B cell (primary cell): ENCODE measurements at regions of chr15 and their contacts with region 1.

Region 1: DNA sequence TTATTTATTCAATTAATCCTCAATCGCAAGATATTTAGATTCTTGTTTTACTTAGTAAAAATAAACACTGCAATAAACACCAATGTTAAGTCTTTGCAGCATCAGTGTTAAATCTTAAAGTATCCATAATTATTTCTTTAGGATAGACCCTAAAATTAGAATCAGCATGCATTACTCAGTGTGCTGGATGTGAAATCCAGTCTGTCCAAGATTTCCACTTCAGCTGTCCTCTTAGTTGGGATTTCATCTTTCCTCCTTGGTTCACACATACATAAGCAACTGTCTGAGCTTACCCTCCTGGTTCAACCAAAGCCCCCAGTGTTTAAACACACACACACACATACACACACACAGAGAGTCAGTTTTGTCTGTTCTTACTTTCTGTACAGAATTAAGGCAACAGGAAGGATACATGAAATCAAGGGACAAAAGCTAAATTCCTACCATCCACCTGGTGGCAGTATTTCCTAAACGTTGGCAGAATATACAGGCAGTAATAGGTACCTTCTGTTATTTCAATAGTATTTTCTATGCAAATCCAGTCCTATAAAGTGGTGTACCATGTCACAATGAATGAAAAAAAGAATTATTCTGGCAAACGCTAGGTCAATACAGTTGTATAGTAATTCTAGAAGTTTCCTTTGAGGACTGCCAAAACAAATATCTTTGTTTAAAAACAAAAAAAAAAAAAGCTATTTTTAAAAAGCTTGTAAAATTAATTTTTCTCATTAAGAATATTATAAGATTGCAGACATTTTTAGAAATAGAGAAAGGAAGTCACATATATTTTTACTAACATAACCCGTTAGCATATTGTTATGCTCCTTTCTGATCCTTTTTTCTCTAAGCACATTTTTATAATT is 27.3 kb upstream of the DMXL2 start:
- DNase-seq: peak; percentile 80
- ATAC-seq: peak; percentile 75
- H3K4me3 ChIP-seq: no peak overlapping the region
- H3K4me3 Mint-ChIP-seq: no peak overlapping the region
- H3K27ac ChIP-seq: no peak overlapping the region
- H3K27ac Mint-ChIP-seq: no peak overlapping the region
- H3K4me1 ChIP-seq: no peaks in the 10 kb centered on the region
- H3K4me1 Mint-ChIP-seq: no peaks in the 10 kb centered on the region
- H3K27me3 ChIP-seq: no peaks in the 10 kb centered on the region
- H3K27me3 Mint-ChIP-seq: no peaks in the 10 kb centered on the region
- CTCF ChIP-seq: peak; percentile 94

Region 2: DNA sequence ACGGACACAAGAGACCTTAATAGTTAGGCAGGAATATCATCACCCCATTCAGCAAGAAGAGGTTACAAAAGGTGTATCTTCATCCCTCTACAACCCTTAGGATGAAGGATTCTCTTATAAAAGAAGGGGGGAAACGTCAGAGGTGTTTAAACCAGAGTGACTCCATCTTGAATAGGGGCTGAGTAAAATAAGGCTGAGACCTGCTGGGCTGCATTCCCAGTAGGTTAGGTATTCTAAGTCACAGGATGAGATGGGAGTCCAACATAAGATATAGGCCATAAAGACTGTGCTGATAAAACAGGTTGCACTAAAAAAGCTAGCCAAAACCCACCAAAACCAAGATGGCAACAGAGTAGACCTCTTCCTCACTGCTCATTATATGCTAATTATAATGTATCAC is 979.8 kb before region 1 on chr15:
- CTCF ChIA-PET with region 1: no interaction called
- POLR2A ChIA-PET with region 1: no interaction called
- intact Hi-C with region 1: no loop called
- DNase-seq: no peak
- ATAC-seq: no peak
- H3K4me3 ChIP-seq: no peak overlapping the region
- H3K4me3 Mint-ChIP-seq: no peak overlapping the region
- H3K27ac ChIP-seq: no peak overlapping the region
- H3K27ac Mint-ChIP-seq: no peak overlapping the region
- H3K4me1 ChIP-seq: no peaks in the 10 kb centered on the region
- H3K4me1 Mint-ChIP-seq: peaks cover 20% of the 10 kb centered on the region
- H3K27me3 ChIP-seq: no peaks in the 10 kb centered on the region
- H3K27me3 Mint-ChIP-seq: no peaks in the 10 kb centered on the region
- CTCF ChIP-seq: no peak

Region 3: DNA sequence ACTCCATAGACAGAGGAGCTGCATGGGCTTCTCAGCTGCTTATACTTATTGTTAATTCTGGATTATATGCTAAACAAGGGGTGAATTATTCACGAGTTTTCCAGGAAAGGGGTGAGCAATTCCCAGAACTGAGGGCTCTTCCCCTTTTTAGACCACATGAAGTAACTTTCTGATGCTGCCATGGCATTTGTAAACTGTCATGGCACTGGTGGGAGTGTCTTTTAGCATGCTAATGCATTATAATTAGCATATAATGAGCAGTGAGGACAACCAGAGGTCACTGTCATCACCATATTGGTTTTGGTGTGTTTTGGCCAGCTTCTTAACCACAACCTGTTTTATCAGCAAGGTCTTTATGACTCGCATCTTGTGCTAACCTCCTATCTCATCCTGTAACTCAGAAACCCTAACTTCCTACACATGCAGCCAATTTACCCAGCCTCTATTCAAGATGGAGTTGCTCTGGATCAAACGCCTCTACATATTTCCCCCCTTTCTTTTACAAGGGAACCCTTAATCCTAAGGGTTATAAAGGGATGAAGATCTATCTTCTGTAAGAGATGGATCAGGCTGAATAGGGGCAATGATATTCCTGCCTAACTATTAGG is 15.2 kb before region 1 on chr15:
- CTCF ChIA-PET with region 1: interaction called, 15 read pairs
- POLR2A ChIA-PET with region 1: no interaction called
- intact Hi-C with region 1: no loop called
- DNase-seq: no peak
- ATAC-seq: no peak
- H3K4me3 ChIP-seq: no peak overlapping the region
- H3K4me3 Mint-ChIP-seq: no peak overlapping the region
- H3K27ac ChIP-seq: no peak overlapping the region
- H3K27ac Mint-ChIP-seq: no peak overlapping the region
- H3K4me1 ChIP-seq: no peaks in the 10 kb centered on the region
- H3K4me1 Mint-ChIP-seq: no peaks in the 10 kb centered on the region
- H3K27me3 ChIP-seq: peaks cover 0 to 10% (median 2%) of the 10 kb centered on the region in 4 experiments
- H3K27me3 Mint-ChIP-seq: peaks cover 7% of the 10 kb centered on the region
- CTCF ChIP-seq: no peak

Region 4: GRCh38 chr15:51726351-51727073 is 76.6 kb after region 1 on chr15:
- CTCF ChIA-PET with region 1: interaction called, 133 read pairs
- POLR2A ChIA-PET with region 1: no interaction called
- intact Hi-C with region 1: no loop called
- DNase-seq: peak; percentile 6
- ATAC-seq: peak; percentile 92
- H3K4me3 ChIP-seq: no peak overlapping the region
- H3K4me3 Mint-ChIP-seq: peak overlapping the region; percentile 32
- H3K27ac ChIP-seq: no peak overlapping the region
- H3K27ac Mint-ChIP-seq: peak overlapping the region; percentile 27
- H3K4me1 ChIP-seq: peaks cover 55 to 66% of the 10 kb centered on the region in 2 donors
- H3K4me1 Mint-ChIP-seq: peaks cover 75% of the 10 kb centered on the region
- H3K27me3 ChIP-seq: no peaks in the 10 kb centered on the region
- H3K27me3 Mint-ChIP-seq: no peaks in the 10 kb centered on the region
- CTCF ChIP-seq: no peak

Region 5: DNA sequence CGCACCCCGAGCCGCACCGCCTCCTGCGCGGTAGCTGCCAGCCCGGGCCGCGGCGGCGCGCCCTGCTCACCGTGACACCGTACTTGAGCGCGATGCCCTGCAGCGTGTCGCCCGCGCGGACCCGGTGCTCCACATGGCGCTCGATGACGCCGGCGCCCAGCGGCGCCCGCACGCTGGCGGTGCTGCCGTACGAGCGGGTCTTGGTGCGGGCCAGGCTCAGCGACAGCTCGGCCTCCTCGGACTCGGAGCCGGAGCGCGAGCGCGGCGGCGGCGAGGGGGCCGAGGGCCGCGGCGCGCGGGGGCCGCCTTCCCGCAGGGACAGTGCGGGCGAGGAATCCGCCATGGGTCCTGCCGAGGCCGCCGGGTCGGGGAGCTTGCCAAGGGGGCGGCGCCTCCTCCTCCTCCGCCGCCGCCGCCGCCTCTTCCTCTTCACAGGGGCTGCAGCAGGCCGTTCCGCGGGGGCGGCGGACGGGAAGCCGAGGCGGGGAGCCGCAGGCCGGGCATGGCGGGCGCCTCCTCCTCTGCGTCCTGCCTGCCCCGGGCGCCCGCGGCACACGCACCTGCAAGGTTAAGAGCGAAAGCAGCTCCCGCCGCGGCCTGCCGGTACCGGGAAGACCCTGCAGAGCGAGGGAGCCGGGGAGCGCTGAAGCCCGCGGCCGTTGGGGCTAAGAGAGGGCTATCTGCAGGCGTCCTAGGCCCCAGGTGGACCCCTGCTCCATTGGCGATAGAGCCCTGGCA is 87.6 kb after region 1 on chr15 and contains the start of gene LYSMD2:
- CTCF ChIA-PET with region 1: interaction called, 133 read pairs
- POLR2A ChIA-PET with region 1: no interaction called
- intact Hi-C with region 1: loop called (anchors 2 kb)
- DNase-seq: peak; percentile 82
- ATAC-seq: peak; percentile 67
- H3K4me3 ChIP-seq: peak within 1 kb of the TSS; percentile 68 to 93 (median 73)
- H3K4me3 Mint-ChIP-seq: peak within 1 kb of the TSS; percentile 98
- H3K27ac ChIP-seq: peak within 1 kb of the TSS; percentile 87 to 89
- H3K27ac Mint-ChIP-seq: peak within 1 kb of the TSS; percentile 95
- H3K4me1 ChIP-seq: peaks cover 49 to 53% of the 10 kb centered on the region in 2 donors
- H3K4me1 Mint-ChIP-seq: peaks cover 55% of the 10 kb centered on the region
- H3K27me3 ChIP-seq: no peaks in the 10 kb centered on the region
- H3K27me3 Mint-ChIP-seq: no peaks in the 10 kb centered on the region
- CTCF ChIP-seq: no peak
- total RNA-seq, gene LYSMD2: 48.2 and 49.4 TPM in 2 replicates

Region 6: DNA sequence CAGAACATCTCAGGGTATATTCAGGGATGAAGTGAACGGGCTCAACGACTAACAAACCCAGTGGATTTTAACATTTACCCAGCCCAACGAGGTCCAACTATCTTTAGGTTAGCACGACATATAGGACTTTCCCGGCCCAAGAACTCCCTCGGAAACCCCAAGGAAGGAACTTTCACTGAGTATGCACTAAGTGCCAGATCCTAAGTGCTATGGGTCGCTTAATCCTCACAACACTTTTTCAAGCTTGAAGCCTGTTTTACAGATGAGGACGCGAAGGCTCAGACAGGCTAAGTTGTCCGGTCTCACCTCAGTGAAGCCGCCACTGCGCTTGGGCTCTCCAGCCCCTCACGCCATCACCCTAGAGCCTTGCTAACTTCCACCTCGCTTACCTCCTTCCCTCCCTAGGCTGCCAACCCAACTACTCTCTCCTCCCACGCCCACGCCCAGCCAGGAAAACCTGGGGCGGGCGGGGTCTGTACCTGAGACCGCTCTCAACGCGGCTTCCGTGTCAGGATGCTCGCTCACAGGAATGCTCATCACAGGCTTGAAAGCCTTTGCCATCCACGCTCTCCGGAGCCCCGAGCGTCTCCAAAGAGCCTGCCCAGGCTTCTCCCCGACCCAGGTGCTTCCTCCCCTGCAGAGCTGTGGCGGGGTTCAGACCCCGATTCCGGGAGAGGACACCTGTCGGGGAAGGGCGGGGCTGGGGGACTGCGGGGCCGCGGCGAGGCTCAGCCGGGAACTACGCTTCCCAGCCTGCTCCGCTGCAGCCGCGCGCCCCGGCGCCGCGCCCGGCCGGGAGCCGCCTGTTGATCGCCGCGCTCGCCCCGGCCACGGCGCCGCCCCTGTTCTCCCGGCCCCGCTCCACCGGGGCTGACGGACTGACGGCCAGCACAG is 101.1 kb after region 1 on chr15 and contains the start of gene TMOD2:
- CTCF ChIA-PET with region 1: interaction called, 27 read pairs
- POLR2A ChIA-PET with region 1: no interaction called
- intact Hi-C with region 1: no loop called
- DNase-seq: peak; percentile 68
- ATAC-seq: peak; percentile 84
- H3K4me3 ChIP-seq: peak within 1 kb of the TSS; percentile 32 to 72 (median 63)
- H3K4me3 Mint-ChIP-seq: peak within 1 kb of the TSS; percentile 95
- H3K27ac ChIP-seq: peak within 1 kb of the TSS; percentile 18 to 31
- H3K27ac Mint-ChIP-seq: peak within 1 kb of the TSS; percentile 87
- H3K4me1 ChIP-seq: peaks cover 14 to 24% of the 10 kb centered on the region in 2 donors
- H3K4me1 Mint-ChIP-seq: peaks cover 43% of the 10 kb centered on the region
- H3K27me3 ChIP-seq: no peaks in the 10 kb centered on the region
- H3K27me3 Mint-ChIP-seq: no peaks in the 10 kb centered on the region
- CTCF ChIP-seq: no peak
- total RNA-seq, gene TMOD2: 25.9 and 30.3 TPM in 2 replicates

Region 7: DNA sequence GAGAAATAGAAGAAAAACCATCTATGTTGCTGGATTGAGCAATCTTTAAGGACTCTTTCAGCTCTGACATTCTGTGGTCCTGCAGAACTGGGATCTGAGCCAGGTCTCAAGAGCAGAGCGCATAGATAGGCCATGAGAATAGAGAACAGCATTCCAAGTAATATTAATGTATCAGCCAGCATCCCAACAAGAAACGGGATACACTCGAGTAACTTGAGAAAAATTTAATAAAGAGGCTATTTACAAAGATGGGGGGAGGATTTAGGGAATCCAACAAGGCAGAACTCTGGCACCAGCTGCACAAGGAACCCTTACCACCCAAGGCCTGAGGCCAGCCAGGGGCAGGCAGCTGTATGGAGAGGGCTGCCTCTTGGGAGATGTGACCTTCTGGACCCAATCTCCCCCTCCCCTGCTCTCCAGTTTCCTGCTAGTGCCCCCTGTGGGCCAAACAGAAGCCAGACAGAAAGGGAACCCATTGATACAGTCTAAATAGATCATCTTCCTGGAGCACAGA is 109.7 kb after region 1 on chr15:
- CTCF ChIA-PET with region 1: interaction called, 27 read pairs
- POLR2A ChIA-PET with region 1: no interaction called
- intact Hi-C with region 1: no loop called
- DNase-seq: no peak
- ATAC-seq: no peak
- H3K4me3 ChIP-seq: no peak overlapping the region
- H3K4me3 Mint-ChIP-seq: no peak overlapping the region
- H3K27ac ChIP-seq: no peak overlapping the region
- H3K27ac Mint-ChIP-seq: no peak overlapping the region
- H3K4me1 ChIP-seq: no peaks in the 10 kb centered on the region
- H3K4me1 Mint-ChIP-seq: peaks cover 4% of the 10 kb centered on the region
- H3K27me3 ChIP-seq: no peaks in the 10 kb centered on the region
- H3K27me3 Mint-ChIP-seq: no peaks in the 10 kb centered on the region
- CTCF ChIP-seq: no peak

Region 8: DNA sequence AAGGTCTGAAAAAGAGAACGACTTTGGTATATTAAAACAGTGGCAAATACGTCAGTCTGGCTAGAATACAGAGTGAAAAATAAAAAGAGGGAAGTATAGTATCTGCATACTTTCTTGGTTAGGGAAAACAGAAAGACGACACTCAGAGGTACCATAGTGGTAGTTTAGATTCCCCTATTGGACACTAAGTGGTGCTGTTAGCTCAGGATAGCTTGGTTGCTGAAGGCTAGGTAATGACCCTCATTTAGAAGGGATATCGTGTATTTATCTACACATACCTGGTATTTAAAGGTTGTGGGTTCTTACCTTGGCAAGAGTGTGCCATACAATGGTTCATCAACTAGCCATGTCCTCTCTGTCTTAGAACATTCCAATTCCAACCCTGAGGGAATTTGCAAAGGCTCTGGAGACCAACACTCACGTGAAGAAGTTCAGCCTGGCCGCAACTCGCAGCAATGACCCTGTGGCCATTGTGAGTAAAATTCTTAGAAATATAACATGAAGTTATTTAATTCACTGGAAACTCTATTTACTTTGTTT is 132.5 kb after region 1 on chr15:
- CTCF ChIA-PET with region 1: interaction called, 728 read pairs
- POLR2A ChIA-PET with region 1: interaction called, 5 read pairs
- intact Hi-C with region 1: no loop called
- DNase-seq: no peak
- ATAC-seq: no peak
- H3K4me3 ChIP-seq: no peak overlapping the region
- H3K4me3 Mint-ChIP-seq: no peak overlapping the region
- H3K27ac ChIP-seq: no peak overlapping the region
- H3K27ac Mint-ChIP-seq: no peak overlapping the region
- H3K4me1 ChIP-seq: no peaks in the 10 kb centered on the region
- H3K4me1 Mint-ChIP-seq: peaks cover 3% of the 10 kb centered on the region
- H3K27me3 ChIP-seq: no peaks in the 10 kb centered on the region
- H3K27me3 Mint-ChIP-seq: no peaks in the 10 kb centered on the region
- CTCF ChIP-seq: no peak